Pancreas (tissue), 10 donors: ENCODE measurements at regions of chr6 and their contacts with region 1.

Region 1: GRCh38 chr6:52049252-52050050 is 38.0 kb downstream of the PKHD1 start:
- DNase-seq: no peak
- ATAC-seq: peak in 3 of 4 donors; percentile 52 to 71 (median 65)
- H3K4me3 ChIP-seq: no peak overlapping the region
- H3K27ac ChIP-seq: no peak overlapping the region
- H3K4me1 ChIP-seq: no peaks in the 10 kb centered on the region
- H3K27me3 ChIP-seq: no peaks in the 10 kb centered on the region
- CTCF ChIP-seq: peak; percentile 28 to 42 (median 38)

Region 2: GRCh38 chr6:51753635-51754034 is 295.8 kb before region 1 on chr6:
- intact Hi-C with region 1: no loop called
- DNase-seq: peak in 3 of 6 donors; percentile 19 to 50 (median 23)
- ATAC-seq: peak in 1 of 4 donors; percentile 37
- H3K4me3 ChIP-seq: no peak overlapping the region
- H3K27ac ChIP-seq: no peak overlapping the region
- H3K4me1 ChIP-seq: no peaks in the 10 kb centered on the region
- H3K27me3 ChIP-seq: no peaks in the 10 kb centered on the region
- CTCF ChIP-seq: peak in 1 of 4 donors; percentile 16

Region 3: GRCh38 chr6:52253494-52253893 is 204.0 kb after region 1 on chr6:
- intact Hi-C with region 1: loop called in 1 of 3 experiments (anchors 10 kb)
- DNase-seq: no peak
- ATAC-seq: no peak
- H3K4me3 ChIP-seq: no peak overlapping the region
- H3K27ac ChIP-seq: no peak overlapping the region
- H3K4me1 ChIP-seq: no peaks in the 10 kb centered on the region
- H3K27me3 ChIP-seq: peaks cover 0 to 3% (median 0%) of the 10 kb centered on the region in 4 donors
- CTCF ChIP-seq: no peak

Region 4: DNA sequence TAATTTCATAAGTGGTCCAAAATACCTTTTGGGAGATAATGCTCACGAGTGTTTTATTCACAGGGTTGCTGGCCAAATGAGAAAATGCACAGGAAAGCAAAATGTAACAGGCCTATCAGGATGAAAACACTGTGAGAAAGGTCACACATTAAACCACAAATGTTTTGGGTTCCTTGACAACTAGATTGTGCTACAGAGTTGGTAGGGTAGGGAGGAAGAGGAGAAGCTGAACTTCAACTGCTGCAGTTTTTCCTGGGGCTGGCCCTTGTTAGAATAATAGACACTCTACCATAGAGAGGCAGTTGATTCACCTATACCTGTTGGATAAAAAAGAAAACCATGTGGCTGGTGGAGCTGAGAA is 284.4 kb after region 1 on chr6:
- intact Hi-C with region 1: no loop called
- DNase-seq: no peak
- ATAC-seq: peak in 3 of 4 donors; percentile 18 to 44 (median 41)
- H3K4me3 ChIP-seq: no peak overlapping the region
- H3K27ac ChIP-seq: peak overlapping the region in 1 of 4 donors; percentile 5
- H3K4me1 ChIP-seq: no peaks in the 10 kb centered on the region
- H3K27me3 ChIP-seq: no peaks in the 10 kb centered on the region
- CTCF ChIP-seq: no peak